PC-9 (cell line): ENCODE measurements at regions of chr18 and their contacts with region 1.

Region 1: DNA sequence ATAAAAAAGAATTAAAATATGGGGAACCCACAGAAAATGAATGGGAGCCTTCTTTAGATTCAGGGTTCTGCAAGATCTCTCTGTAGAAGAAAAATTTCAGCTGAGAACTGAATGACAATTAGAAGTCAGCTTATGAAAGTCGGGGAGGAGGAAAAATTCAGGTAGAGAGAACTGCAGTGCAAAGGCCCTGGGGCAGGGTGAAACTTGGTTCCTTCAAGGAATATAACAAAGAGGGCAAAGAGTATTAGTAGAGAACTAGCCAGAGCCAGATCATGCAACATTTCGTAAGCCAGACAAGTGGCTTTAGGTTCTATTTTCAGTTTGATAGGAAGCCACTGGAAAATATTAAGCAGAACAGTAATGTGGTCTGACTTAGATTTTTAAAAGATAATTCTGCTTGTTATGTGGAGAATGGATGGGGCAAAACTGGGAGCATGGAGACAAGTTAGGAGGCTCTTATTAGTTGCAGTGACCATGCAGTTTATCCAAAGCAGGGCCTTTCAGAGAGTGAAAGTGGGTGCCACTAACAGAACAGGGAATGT is 27.9 kb downstream of the RAB27B start:
- DNase-seq: no peak
- H3K4me3 ChIP-seq: no peak overlapping the region
- H3K27ac ChIP-seq: no peak overlapping the region
- H3K4me1 ChIP-seq: no peaks in the 10 kb centered on the region
- H3K27me3 ChIP-seq: no peaks in the 10 kb centered on the region
- CTCF ChIP-seq: no peak

Region 2: DNA sequence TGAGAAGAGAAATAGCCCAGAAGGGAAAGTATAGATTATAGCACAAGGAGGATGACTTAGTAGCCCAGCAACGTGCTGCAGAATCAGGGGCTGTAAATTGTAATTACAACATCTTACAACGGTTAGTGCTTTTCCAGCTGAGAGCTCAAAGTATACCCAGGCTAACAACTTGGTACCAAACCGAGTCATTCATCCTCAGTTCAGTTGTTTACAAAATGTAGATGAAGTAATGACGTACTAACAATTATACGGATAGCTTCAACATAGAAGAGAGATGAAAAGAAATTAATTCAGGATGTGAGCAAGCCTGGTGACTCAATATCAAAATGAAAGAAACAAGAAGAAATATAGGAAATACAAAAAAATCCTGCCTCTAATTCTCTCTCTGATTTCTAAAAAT is 166.0 kb before region 1 on chr18:
- CTCF ChIA-PET with region 1: no interaction called
- POLR2A ChIA-PET with region 1: no interaction called
- intact Hi-C with region 1: no loop called
- DNase-seq: no peak
- H3K4me3 ChIP-seq: no peak overlapping the region
- H3K27ac ChIP-seq: no peak overlapping the region
- H3K4me1 ChIP-seq: no peaks in the 10 kb centered on the region
- H3K27me3 ChIP-seq: no peaks in the 10 kb centered on the region
- CTCF ChIP-seq: no peak

Region 3: GRCh38 chr18:54873884-54874255 is 17.7 kb after region 1 on chr18:
- CTCF ChIA-PET with region 1: interaction called, 13 read pairs
- POLR2A ChIA-PET with region 1: no interaction called
- intact Hi-C with region 1: no loop called
- DNase-seq: no peak
- H3K4me3 ChIP-seq: no peak overlapping the region
- H3K27ac ChIP-seq: no peak overlapping the region
- H3K4me1 ChIP-seq: no peaks in the 10 kb centered on the region
- H3K27me3 ChIP-seq: no peaks in the 10 kb centered on the region
- CTCF ChIP-seq: no peak